ENCODE measurements at regions of chr14 and their contacts with region 1.

Region 1: GRCh38 chr14:102356280-102356679 is 6.4 kb downstream of the CINP start:
- DNase-seq: no peak
- ATAC-seq: no peak
- H3K4me3 ChIP-seq: no peak overlapping the region
- H3K4me3 Mint-ChIP-seq: no peak overlapping the region
- H3K27ac ChIP-seq: no peak overlapping the region
- H3K27ac Mint-ChIP-seq: no peak overlapping the region
- H3K4me1 ChIP-seq: no peaks in the 10 kb centered on the region
- H3K4me1 Mint-ChIP-seq: peaks cover 13 to 25% (median 19%) of the 10 kb centered on the region in 3 donors
- H3K27me3 ChIP-seq: no peaks in the 10 kb centered on the region
- H3K27me3 Mint-ChIP-seq: no peaks in the 10 kb centered on the region

Region 2: GRCh38 chr14:102304611-102305509 is 51.4 kb before region 1 on chr14 and contains the start of gene MOK:
- CTCF ChIA-PET with region 1: no interaction called
- POLR2A ChIA-PET with region 1: interaction called in 1 of 2 experiments, 20 read pairs
- DNase-seq: peak; percentile 84 to 99 (median 94)
- ATAC-seq: peak; percentile 92 to 94 (median 93)
- H3K4me3 ChIP-seq: peak within 1 kb of the TSS; percentile 61 to 74
- H3K4me3 Mint-ChIP-seq: peak within 1 kb of the TSS; percentile 84 to 94 (median 94)
- H3K27ac ChIP-seq: peak within 1 kb of the TSS; percentile 67
- H3K27ac Mint-ChIP-seq: peak within 1 kb of the TSS; percentile 92 to 96
- H3K4me1 ChIP-seq: peaks cover 2 to 12% of the 10 kb centered on the region in 2 experiments
- H3K4me1 Mint-ChIP-seq: peaks cover 6 to 11% (median 7%) of the 10 kb centered on the region in 3 donors
- H3K27me3 ChIP-seq: peaks cover 0 to 3% of the 10 kb centered on the region in 2 experiments
- H3K27me3 Mint-ChIP-seq: peaks cover 0 to 2% of the 10 kb centered on the region in 2 donors
- total RNA-seq, gene MOK: 0.77 to 4.1 (median 1.9) TPM

Region 3: GRCh38 chr14:102319351-102320032 is 36.8 kb before region 1 on chr14 and contains the start of gene ZNF839:
- CTCF ChIA-PET with region 1: no interaction called
- POLR2A ChIA-PET with region 1: no interaction called
- DNase-seq: peak; percentile 85 to 96 (median 91)
- ATAC-seq: peak; percentile 71 to 76 (median 74)
- H3K4me3 ChIP-seq: peak within 1 kb of the TSS; percentile 86 to 99
- H3K4me3 Mint-ChIP-seq: peak within 1 kb of the TSS; percentile 94 to 95 (median 94)
- H3K27ac ChIP-seq: peak within 1 kb of the TSS; percentile 95
- H3K27ac Mint-ChIP-seq: peak within 1 kb of the TSS; percentile 96
- H3K4me1 ChIP-seq: peaks cover 28 to 49% of the 10 kb centered on the region in 2 experiments
- H3K4me1 Mint-ChIP-seq: peaks cover 45 to 67% (median 63%) of the 10 kb centered on the region in 3 donors
- H3K27me3 ChIP-seq: no peaks in the 10 kb centered on the region
- H3K27me3 Mint-ChIP-seq: peaks cover 0 to 2% of the 10 kb centered on the region in 2 donors
- total RNA-seq, gene ZNF839: 17.9 to 24.6 (median 19.9) TPM

Measured in T-cell (primary cell).